Panc1 (cell line): ENCODE measurements at regions of chr22 and their contacts with region 1.

Region 1: GRCh38 chr22:31272522-31273446 is 19.5 kb downstream of the PIK3IP1 start:
- DNase-seq: no peak
- ATAC-seq: peak; percentile 92
- H3K4me3 ChIP-seq: no peak overlapping the region
- H3K27ac ChIP-seq: no peak overlapping the region; the same call in 1 of the 2 replicates
- H3K4me1 ChIP-seq: no peaks in the 10 kb centered on the region
- H3K27me3 ChIP-seq: no peaks in the 10 kb centered on the region
- CTCF ChIP-seq: peak; percentile 81

Region 2: GRCh38 chr22:30843245-30843644 is 429.5 kb before region 1 on chr22:
- CTCF ChIA-PET with region 1: interaction called, 11 read pairs
- POLR2A ChIA-PET with region 1: no interaction called
- in situ Hi-C with region 1: no loop called
- intact Hi-C with region 1: no loop called
- DNase-seq: no peak
- ATAC-seq: no peak
- H3K4me3 ChIP-seq: no peak overlapping the region
- H3K27ac ChIP-seq: no peak overlapping the region
- H3K4me1 ChIP-seq: no peaks in the 10 kb centered on the region
- H3K27me3 ChIP-seq: no peaks in the 10 kb centered on the region
- CTCF ChIP-seq: no peak

Region 3: DNA sequence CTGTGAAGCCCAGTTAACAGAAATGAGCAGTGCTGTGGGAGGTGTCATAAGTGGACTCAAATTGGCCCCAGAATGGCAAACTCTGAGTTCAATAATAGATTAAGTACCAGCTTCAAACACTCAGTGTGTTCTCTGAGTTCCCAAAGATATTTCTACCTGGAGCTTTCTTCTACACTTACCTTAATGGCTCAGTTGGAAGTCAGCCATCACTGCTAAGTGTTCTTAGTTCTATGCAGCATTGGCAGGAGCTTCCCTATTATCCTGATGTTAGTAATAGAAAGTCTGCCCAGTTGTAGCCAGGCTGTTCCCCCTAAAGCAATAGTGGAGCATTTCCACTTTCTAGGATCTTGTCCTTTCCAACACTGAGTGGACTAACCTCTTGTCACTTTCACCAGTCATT is 29.2 kb after region 1 on chr22:
- CTCF ChIA-PET with region 1: no interaction called
- POLR2A ChIA-PET with region 1: no interaction called
- in situ Hi-C with region 1: no loop called
- intact Hi-C with region 1: no loop called
- DNase-seq: no peak
- ATAC-seq: no peak
- H3K4me3 ChIP-seq: no peak overlapping the region
- H3K27ac ChIP-seq: no peak overlapping the region
- H3K4me1 ChIP-seq: no peaks in the 10 kb centered on the region
- H3K27me3 ChIP-seq: no peaks in the 10 kb centered on the region; the same call in 1 of the 2 replicates
- CTCF ChIP-seq: no peak

Region 4: GRCh38 chr22:31363885-31364465 is 91.2 kb after region 1 on chr22:
- CTCF ChIA-PET with region 1: interaction called, 11 read pairs
- POLR2A ChIA-PET with region 1: no interaction called
- in situ Hi-C with region 1: no loop called
- intact Hi-C with region 1: no loop called
- DNase-seq: no peak
- ATAC-seq: no peak
- H3K4me3 ChIP-seq: no peak overlapping the region
- H3K27ac ChIP-seq: no peak overlapping the region
- H3K4me1 ChIP-seq: no peaks in the 10 kb centered on the region
- H3K27me3 ChIP-seq: no peaks in the 10 kb centered on the region
- CTCF ChIP-seq: no peak